ENCODE measurements at regions of chr15 and their contacts with region 1.

Region 1: DNA sequence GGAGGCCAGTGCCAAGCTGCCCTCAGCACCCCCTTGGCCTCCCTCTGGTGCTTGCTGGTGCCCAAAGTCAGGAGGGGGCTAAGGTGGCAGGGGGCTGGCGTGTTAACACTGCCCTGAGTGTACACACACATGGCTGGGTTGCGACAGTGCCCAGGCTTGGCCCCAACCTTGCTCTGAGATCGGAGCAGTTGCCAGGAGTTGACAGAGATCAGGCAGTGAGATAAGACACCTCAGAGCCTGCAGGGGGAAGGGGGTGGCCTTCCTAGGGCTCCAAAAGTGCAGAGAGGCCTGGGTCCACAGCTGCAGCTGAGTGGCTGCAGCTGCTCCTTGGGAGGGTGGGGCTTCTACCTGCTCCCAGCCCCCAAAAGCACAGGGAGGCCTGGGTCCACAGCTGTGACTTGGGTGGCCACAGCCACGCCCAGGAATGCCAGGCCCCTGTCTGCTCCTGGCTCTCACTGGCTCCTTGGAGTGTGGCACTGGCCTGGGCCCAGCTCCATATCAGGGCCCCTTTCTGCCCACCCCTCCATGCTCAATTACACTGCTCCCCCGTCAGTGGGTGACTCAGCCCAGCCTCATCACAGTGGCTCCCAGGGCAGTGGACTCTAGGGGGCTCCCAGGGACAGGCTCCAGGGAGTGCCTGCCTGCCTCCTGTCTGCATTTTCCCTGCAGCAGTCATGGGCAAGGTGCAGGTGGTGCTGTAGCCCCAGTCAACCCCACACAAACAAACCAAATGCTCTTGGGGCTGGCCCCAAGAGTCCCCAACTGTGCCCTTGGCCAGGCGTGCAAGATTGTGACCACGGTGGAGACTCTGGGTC is 56.4 kb upstream of the C15orf39 start:
- DNase-seq: no peak
- H3K4me3 ChIP-seq: peak overlapping the region in 1 of 7 experiments; percentile 16
- H3K27ac ChIP-seq: no peak overlapping the region
- H3K4me1 ChIP-seq: peaks cover 0 to 8% (median 2%) of the 10 kb centered on the region in 4 experiments
- H3K27me3 ChIP-seq: no peaks in the 10 kb centered on the region

Region 2: DNA sequence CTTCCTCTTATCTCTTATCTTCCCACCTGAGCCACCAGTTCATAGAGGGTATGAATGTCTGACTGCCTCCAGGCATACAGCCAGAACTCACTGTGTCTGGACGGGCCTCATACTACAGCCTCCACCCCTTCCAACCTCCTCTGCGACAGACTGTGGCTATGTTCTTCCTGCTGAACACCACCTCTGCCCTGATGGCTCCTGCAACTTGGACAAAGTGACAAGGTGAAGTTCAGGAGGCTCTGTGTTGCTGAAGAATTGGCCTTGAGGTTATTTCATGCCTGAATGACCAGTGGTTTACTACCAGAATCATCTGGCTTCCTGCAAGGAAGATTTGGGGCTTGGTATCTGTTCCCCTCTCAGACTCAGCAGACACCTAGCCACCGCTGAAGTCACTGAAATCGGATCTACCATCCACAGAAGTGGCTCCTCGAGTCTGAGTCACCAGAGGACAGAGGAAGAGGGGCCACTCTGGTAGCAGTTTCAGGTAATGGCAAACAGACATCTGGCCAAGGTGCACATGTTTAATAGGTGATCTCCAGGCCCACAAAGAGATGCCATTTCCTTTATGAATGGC is 288.1 kb before region 1 on chr15:
- CTCF ChIA-PET with region 1: no interaction called
- POLR2A ChIA-PET with region 1: no interaction called
- DNase-seq: peak in 1 of 3 donors; percentile 43
- H3K4me3 ChIP-seq: no peak overlapping the region
- H3K27ac ChIP-seq: peak overlapping the region in 1 of 2 experiments; percentile 2
- H3K4me1 ChIP-seq: peaks cover 2 to 38% (median 36%) of the 10 kb centered on the region in 4 experiments
- H3K27me3 ChIP-seq: no peaks in the 10 kb centered on the region

Region 3: DNA sequence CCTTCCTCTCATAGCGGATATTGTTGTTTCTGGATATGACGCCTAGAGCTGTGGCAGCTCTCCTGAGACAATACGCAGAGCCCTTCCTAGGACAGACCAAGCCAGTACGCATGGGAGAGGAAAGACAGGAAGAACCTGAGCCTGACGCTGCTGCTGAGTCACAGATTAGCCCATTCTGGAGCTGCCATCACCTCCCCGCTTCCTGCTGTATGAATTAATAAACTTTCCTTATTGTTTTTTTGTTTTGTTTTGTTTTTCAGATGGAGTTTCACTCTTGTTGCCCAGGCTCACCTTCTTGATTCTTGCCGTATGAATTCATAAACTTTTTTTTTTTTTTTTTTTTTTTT is 54.9 kb before region 1 on chr15:
- CTCF ChIA-PET with region 1: no interaction called
- POLR2A ChIA-PET with region 1: no interaction called
- DNase-seq: peak; percentile 80 to 86 (median 81)
- H3K4me3 ChIP-seq: peak overlapping the region in 4 of 7 experiments; percentile 22 to 59 (median 44)
- H3K27ac ChIP-seq: peak overlapping the region in 1 of 2 experiments; percentile 57
- H3K4me1 ChIP-seq: peaks cover 2 to 13% (median 8%) of the 10 kb centered on the region in 4 experiments
- H3K27me3 ChIP-seq: no peaks in the 10 kb centered on the region

Region 4: DNA sequence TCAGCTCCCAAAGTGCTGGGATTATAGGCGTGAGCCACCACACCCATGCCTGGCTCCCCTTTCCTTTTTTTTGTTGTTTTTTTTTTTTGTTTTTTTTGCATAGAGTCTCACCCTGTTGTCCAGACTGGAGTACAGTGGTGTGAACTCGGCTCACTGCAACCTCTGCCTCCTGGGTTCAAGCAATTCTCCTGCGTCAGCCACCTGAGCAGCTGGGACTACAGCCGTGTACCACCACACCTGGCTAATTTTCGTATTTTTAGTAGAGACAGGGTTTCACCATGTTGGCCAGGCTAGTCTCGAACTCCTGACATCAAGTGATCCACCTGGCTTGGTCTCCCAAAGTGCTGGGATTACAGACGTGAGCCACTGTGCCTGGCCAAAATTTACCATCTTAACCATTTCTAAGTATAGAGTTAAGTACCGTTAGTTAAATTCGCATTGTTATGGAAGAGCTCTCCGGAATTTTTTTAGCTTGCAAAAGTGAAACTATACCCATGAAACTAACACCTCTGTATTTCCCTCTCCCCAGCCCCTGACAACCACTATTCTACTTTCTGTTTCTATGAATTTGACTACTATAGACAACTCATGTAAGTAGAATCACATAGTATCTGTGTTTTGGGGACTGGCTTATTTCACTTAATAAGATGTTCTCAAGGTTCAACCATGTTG is 14.5 kb before region 1 on chr15:
- CTCF ChIA-PET with region 1: interaction called, 15 read pairs
- POLR2A ChIA-PET with region 1: no interaction called
- DNase-seq: peak; percentile 46 to 85 (median 81)
- H3K4me3 ChIP-seq: peak overlapping the region in 4 of 7 experiments; percentile 5 to 50 (median 33)
- H3K27ac ChIP-seq: no peak overlapping the region
- H3K4me1 ChIP-seq: peaks cover 3 to 56% (median 26%) of the 10 kb centered on the region in 4 experiments
- H3K27me3 ChIP-seq: no peaks in the 10 kb centered on the region

Region 5: DNA sequence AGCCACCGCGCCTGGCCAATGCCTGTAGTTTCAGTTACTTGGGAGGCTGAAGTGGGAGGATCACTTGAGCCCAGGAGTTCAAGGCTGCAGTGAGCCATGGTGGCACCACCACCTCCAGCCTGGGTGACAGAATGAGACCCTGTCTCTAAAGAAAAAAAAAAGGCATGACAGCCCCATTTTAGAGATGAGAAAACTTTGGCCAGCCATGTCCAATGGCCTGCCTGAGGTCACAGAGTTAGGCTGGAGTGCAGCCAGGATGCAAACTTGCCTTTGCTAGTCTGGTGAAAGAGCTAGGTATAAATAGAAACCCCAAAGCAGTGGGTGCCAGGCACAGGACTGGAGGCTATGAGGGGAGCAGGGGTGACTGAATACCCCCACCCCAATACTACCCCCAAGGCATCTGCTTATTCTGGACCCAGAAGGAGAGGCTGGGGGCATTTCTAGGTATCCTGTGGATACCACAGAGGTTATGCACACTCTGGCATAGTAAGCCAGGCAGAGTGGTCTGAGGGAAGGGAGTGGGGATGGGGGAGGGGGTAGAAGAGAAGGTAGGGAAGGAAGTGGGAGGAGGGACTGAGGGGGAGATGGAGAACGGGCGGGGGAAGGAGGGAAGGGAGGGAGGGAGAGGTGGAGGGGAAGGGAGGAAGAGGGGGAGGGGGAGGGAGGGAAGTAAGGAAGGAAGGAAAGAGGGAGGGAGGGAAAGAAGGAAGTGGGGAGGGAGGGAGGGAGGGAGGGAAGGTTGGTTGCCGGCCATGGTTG is 40.2 kb after region 1 on chr15:
- CTCF ChIA-PET with region 1: no interaction called
- POLR2A ChIA-PET with region 1: no interaction called
- DNase-seq: no peak
- H3K4me3 ChIP-seq: no peak overlapping the region
- H3K27ac ChIP-seq: no peak overlapping the region
- H3K4me1 ChIP-seq: peaks cover 11 to 44% (median 35%) of the 10 kb centered on the region in 4 experiments
- H3K27me3 ChIP-seq: no peaks in the 10 kb centered on the region

Measured in common myeloid progenitor, CD34-positive (primary cell).